ENCODE measurements at regions of chr19 and their contacts with region 1.

Region 1: GRCh38 chr19:9796113-9796773 is 22.6 kb downstream of the FBXL12 start:
- DNase-seq: peak; percentile 96
- H3K4me3 Mint-ChIP-seq: no peak overlapping the region
- H3K27ac Mint-ChIP-seq: peak overlapping the region; percentile 63
- H3K4me1 Mint-ChIP-seq: peaks cover 12% of the 10 kb centered on the region
- H3K27me3 Mint-ChIP-seq: no peaks in the 10 kb centered on the region

Region 2: DNA sequence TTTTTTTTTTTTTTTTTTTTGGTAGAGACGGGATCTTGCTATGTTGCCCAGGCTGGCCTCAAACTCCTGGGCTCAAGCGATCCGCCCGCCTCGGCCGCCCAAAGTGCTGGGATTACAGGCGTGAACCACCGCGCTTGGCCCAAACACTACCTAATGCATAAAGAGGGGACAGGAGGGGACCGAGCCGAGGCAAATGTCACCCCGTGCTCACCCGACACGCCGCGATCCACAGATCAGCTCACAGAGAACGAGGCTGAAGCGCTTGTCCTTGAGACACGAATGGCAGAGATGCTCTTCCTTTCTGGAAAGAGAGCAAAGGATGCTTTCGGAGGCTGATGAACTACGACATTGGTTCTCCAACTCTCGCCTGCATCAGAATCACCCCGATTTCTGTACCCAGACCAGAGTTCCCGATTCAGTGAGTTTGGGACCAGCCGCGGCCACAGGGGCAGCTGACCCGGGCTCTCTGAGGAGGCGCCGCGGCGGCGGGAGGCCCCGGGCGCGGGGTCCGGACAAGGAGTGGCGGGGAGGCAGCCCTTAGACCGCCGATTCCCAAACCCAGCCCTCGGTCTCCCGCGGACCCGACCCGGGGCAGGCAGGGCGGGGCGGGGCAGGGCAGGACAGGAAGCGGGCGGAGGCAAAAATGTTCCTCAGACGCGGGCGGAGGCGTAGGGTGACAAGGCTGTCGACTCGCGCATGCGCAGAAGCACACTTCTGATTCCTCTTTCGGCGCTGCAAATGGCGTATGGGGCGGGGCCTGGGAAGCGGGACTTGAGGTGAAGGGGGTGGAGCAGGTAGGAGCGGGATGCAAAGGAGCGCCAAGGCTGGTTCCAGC is 486.9 kb before region 1 on chr19 and contains the start of gene ZNF699:
- CTCF ChIA-PET with region 1: interaction called, 4 read pairs
- intact Hi-C with region 1: loop called (anchors 1 kb)
- DNase-seq: peak; percentile 99
- H3K4me3 Mint-ChIP-seq: peak within 1 kb of the TSS; percentile 86
- H3K27ac Mint-ChIP-seq: peak within 1 kb of the TSS; percentile 97
- H3K4me1 Mint-ChIP-seq: peaks cover 12% of the 10 kb centered on the region
- H3K27me3 Mint-ChIP-seq: peaks cover 2% of the 10 kb centered on the region
- total RNA-seq, gene ZNF699: 4.6 to 6.4 TPM

Region 3: GRCh38 chr19:9597027-9597426 is 199.2 kb before region 1 on chr19:
- CTCF ChIA-PET with region 1: no interaction called
- intact Hi-C with region 1: no loop called
- DNase-seq: no peak
- H3K4me3 Mint-ChIP-seq: no peak overlapping the region
- H3K27ac Mint-ChIP-seq: peak overlapping the region; percentile 63
- H3K4me1 Mint-ChIP-seq: peaks cover 3% of the 10 kb centered on the region
- H3K27me3 Mint-ChIP-seq: peaks cover 4% of the 10 kb centered on the region

Region 4: DNA sequence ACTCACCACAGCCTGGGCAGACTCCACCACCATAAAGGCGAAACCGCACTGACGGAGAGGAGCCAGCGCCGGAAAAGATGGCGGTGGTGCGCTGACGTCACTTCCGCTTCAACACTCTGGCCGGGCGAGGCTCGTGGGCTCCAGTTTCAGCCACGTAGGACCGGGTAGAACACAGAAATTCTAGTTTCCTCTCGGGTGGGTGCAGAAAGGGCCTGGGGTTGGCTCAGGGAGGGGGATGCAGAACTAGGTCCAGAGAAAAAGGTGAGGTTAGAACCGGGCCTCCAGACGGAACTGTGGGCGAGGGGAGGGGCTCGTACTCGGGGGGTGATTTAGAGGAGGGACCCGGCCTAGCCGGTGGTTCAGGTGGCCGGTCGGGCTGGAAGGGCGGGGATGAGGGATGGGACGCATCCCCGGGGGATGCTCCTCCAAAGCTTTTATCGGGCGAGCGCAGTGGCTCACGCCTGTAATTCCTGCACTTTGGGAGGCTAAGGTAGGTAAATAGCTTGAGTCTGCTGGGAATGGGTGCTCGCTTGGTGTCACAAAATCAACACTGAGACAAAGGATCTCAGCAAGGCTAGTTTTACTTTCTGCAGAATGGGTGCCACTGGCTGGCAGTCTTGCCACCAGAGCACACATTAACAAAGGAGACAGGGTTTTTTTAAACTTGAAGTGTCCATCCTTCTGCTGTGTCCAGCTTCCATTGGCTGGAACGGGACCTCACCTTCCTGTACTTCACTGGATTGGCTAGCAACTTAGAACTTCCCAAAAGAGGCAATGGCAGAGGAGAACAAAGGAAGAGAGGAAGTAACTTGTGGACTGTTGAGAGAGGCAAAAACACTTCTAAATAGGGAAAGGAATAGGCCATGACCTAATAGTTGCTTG is 174.8 kb before region 1 on chr19 and contains the start of gene ZNF561:
- CTCF ChIA-PET with region 1: interaction called, 11 read pairs
- intact Hi-C with region 1: loop called (anchors 1 kb)
- DNase-seq: peak; percentile 90
- H3K4me3 Mint-ChIP-seq: peak within 1 kb of the TSS; percentile 98
- H3K27ac Mint-ChIP-seq: peak within 1 kb of the TSS; percentile 99
- H3K4me1 Mint-ChIP-seq: peaks cover 18% of the 10 kb centered on the region
- H3K27me3 Mint-ChIP-seq: no peaks in the 10 kb centered on the region
- total RNA-seq, gene ZNF561: 28.7 to 29.4 TPM

Region 5: GRCh38 chr19:9757544-9758501 is 38.4 kb before region 1 on chr19:
- CTCF ChIA-PET with region 1: no interaction called
- intact Hi-C with region 1: no loop called
- DNase-seq: no peak
- H3K4me3 Mint-ChIP-seq: no peak overlapping the region
- H3K27ac Mint-ChIP-seq: no peak overlapping the region
- H3K4me1 Mint-ChIP-seq: no peaks in the 10 kb centered on the region
- H3K27me3 Mint-ChIP-seq: no peaks in the 10 kb centered on the region

Region 6: DNA sequence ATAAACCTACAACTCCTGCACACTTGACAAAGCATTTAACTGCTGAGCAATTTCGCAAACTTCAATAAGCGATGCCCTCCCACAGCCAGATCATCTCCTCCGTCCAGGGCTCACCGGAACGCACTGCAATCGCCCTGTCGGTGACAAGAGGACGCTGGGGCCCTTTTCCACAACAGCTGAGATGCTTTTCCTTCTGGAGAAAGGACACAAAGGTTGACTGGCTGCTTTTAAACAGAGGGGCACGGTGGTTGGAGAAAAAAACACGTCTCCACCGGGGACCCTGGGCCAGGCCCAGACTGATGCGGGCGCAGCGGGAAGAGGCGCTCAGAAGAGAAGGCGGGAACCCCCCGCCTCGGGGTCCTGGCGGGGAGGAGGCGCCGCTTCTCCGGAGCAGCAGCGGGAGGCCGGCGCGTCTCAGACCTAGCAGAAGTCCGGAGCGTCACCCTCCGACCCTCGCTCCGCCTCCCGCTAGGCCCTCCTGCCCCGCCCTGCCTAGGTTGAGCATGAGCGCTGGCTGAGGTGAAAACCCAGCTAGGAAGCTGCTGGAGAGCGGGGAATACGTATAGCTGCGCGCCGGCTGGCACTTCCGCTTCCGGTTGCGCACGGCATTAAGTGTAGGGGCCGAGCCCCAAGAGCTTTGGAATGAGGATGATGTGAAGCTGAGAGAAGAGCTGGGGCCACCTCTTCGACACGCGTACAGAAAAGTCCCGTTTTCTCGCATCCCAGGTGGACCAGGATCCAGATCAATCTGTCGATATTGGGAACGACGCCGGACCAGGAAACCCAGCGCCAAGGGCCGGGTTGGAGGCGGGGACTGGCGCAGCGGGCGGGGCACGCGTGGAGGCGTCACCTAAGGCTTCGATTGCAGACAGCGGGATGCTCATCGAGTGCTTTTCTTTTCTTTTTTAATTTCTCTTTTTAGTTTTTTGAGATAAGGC is 27.8 kb before region 1 on chr19 and contains the start of gene ZNF846:
- CTCF ChIA-PET with region 1: interaction called, 3 read pairs
- intact Hi-C with region 1: loop called (anchors 1 kb)
- DNase-seq: peak; percentile 96
- H3K4me3 Mint-ChIP-seq: peak within 1 kb of the TSS; percentile 98
- H3K27ac Mint-ChIP-seq: peak within 1 kb of the TSS; percentile 98
- H3K4me1 Mint-ChIP-seq: peaks cover 5% of the 10 kb centered on the region
- H3K27me3 Mint-ChIP-seq: no peaks in the 10 kb centered on the region
- total RNA-seq, gene ZNF846: 2.0 to 3.5 TPM

Region 7: DNA sequence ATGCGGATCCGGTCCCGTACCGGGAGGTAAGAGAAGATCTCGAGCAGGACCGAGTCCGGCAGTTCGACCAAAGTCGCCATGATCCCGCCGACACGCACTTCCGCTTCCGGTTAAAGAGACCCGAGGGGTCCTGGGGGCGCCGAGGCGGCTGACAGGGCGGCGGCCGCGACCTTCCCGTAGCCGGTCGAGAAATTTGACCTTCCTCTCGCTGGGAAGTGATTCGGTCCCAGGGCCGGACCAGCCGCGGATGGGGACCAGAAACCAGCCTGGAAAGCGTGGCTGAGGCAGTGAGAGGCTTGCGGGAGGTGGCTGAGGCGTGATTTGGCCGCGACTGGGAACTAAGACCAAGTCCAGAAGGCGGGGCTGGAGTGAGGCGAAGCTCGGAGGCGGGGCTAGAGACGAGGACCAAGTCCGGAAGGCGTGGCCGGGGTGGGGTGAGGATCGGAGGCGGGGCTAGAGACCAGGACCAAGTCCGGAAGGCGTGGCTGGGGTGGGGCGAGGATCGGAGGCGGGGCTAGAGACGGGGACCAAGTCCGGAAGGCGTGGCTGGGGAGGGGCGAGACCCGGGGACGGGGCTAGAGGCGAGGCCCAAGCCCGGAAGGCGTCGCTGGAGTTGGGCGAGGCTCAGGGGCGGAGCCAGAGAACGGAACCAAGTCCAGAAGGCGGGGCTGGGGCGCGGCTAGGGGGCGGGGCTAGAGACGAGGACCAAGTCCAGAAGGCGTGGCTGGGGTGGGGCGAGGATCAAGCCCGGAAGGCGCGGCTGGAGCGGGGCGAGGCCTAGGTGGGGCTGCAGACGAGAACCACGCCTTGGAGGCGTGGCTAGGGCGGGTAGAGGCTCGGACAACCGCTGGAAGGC is 22.7 kb after region 1 on chr19 and contains the start of gene FBXL12:
- CTCF ChIA-PET with region 1: no interaction called
- intact Hi-C with region 1: loop called (anchors 1 kb)
- DNase-seq: peak; percentile 100
- H3K4me3 Mint-ChIP-seq: peak within 1 kb of the TSS; percentile 82
- H3K27ac Mint-ChIP-seq: peak within 1 kb of the TSS; percentile 86
- H3K4me1 Mint-ChIP-seq: peaks cover 31% of the 10 kb centered on the region
- H3K27me3 Mint-ChIP-seq: no peaks in the 10 kb centered on the region
- total RNA-seq, gene FBXL12: 17.5 to 19.8 TPM

Measured in activated naive CD4-positive, alpha-beta T cell treated with anti-CD3 and anti-CD28 coated beads for 36 hours (primary cell).